Heart left ventricle (tissue), 16 donors: ENCODE measurements at regions of chr2 and their contacts with region 1.

Region 1: DNA sequence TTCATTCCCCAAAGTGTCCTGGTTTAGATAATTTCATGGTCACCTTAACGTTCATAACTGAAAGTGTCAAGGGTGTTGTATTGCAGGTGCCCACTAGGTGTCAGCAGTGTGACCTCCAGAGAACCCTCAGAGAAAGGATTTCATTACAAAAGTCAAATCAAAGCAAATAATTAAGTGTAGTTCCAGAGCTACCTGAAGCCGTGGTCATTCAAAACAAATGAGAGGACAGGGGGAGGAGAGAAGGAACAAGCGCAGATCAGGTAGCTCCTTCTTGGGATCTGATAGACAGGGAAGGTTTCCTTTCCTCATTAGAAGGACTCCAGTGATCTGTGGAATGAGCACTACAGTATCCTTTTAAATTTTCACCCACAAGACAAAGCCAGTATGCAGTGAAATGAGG is at the start of gene SLC9A4:
- DNase-seq: peak in 1 of 5 donors; percentile 27
- ATAC-seq: no peak
- H3K4me3 ChIP-seq: no peak within 1 kb of the TSS
- H3K27ac ChIP-seq: no peak within 1 kb of the TSS
- H3K4me1 ChIP-seq: no peaks in the 10 kb centered on the region
- H3K27me3 ChIP-seq: peaks cover 0 to 35% (median 0%) of the 10 kb centered on the region in 9 donors
- CTCF ChIP-seq: peak; percentile 69 to 87 (median 80)
- POLR2A ChIP-seq: no peak
- total RNA-seq, gene SLC9A4: not detected

Region 2: DNA sequence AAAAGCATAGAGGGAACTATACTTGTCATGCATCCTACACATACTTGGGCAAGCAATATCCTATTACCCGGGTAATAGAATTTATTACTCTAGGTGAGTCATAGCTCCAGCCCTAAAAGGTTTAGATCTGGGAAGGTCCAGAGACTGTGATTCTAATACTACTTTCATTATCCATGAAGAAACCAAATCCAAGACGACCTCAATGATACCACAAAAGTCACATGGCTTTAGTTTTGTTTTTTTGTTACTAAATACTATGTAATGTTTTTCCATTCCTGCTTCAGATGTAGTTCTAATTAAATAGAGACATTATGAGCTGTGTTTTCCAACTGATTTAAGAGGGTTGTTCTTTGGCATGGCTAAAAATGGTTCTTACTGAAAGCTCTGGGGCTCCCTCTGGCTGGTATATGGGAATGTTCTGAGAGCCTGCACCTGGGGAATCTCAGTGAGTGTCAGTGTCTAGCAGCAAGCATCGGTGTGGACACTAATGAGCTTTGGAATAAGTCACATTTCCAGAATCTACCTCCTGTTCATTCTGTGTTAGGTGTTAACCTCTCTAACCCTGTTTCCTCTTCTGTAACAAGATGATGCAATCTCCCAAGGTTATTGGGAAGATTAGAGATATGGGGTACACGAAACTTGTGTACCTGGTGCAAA is 306.7 kb before region 1 on chr2:
- intact Hi-C with region 1: no loop called
- DNase-seq: no peak
- ATAC-seq: peak; percentile 47 to 91 (median 81)
- H3K4me3 ChIP-seq: no peak overlapping the region
- H3K27ac ChIP-seq: no peak overlapping the region
- H3K4me1 ChIP-seq: peaks cover 0 to 13% (median 4%) of the 10 kb centered on the region in 12 donors
- H3K27me3 ChIP-seq: no peaks in the 10 kb centered on the region
- CTCF ChIP-seq: peak; percentile 36 to 79 (median 66)
- POLR2A ChIP-seq: no peak

Region 3: GRCh38 chr2:102278720-102279390 is 194.2 kb before region 1 on chr2:
- intact Hi-C with region 1: no loop called
- DNase-seq: peak in 1 of 5 donors; percentile 30
- ATAC-seq: no peak
- H3K4me3 ChIP-seq: no peak overlapping the region
- H3K27ac ChIP-seq: no peak overlapping the region
- H3K4me1 ChIP-seq: peaks cover 0 to 29% (median 0%) of the 10 kb centered on the region in 12 donors
- H3K27me3 ChIP-seq: peaks cover 0 to 42% (median 0%) of the 10 kb centered on the region in 9 donors
- CTCF ChIP-seq: no peak
- POLR2A ChIP-seq: no peak

Region 4: GRCh38 chr2:102615622-102616436 is 142.8 kb after region 1 on chr2:
- intact Hi-C with region 1: loop called in 8 of 10 experiments (anchors 2 to 10 kb)
- DNase-seq: peak; percentile 20 to 73 (median 37)
- ATAC-seq: peak in 3 of 4 donors; percentile 64 to 86 (median 79)
- H3K4me3 ChIP-seq: no peak overlapping the region
- H3K27ac ChIP-seq: no peak overlapping the region
- H3K4me1 ChIP-seq: peaks cover 0 to 17% (median 6%) of the 10 kb centered on the region in 12 donors
- H3K27me3 ChIP-seq: peaks cover 6 to 58% (median 18%) of the 10 kb centered on the region in 9 donors
- CTCF ChIP-seq: peak; percentile 53 to 83 (median 68)
- POLR2A ChIP-seq: no peak

Region 5: GRCh38 chr2:102703748-102704147 is 230.7 kb after region 1 on chr2:
- intact Hi-C with region 1: loop called (anchors 2 to 5 kb)
- DNase-seq: no peak
- ATAC-seq: peak; percentile 51 to 63 (median 62)
- H3K4me3 ChIP-seq: no peak overlapping the region
- H3K27ac ChIP-seq: no peak overlapping the region
- H3K4me1 ChIP-seq: no peaks in the 10 kb centered on the region
- H3K27me3 ChIP-seq: peaks cover 0 to 14% (median 5%) of the 10 kb centered on the region in 9 donors
- CTCF ChIP-seq: peak in 11 of 12 donors; percentile 15 to 51 (median 37)
- POLR2A ChIP-seq: no peak

Region 6: GRCh38 chr2:102872388-102872787 is 399.4 kb after region 1 on chr2:
- intact Hi-C with region 1: loop called in 3 of 10 experiments (anchors 5 to 10 kb)
- DNase-seq: no peak
- ATAC-seq: no peak
- H3K4me3 ChIP-seq: no peak overlapping the region
- H3K27ac ChIP-seq: no peak overlapping the region
- H3K4me1 ChIP-seq: no peaks in the 10 kb centered on the region
- H3K27me3 ChIP-seq: no peaks in the 10 kb centered on the region
- CTCF ChIP-seq: peak in 8 of 12 donors; percentile 10 to 49 (median 31)
- POLR2A ChIP-seq: no peak